ENCODE measurements at regions of chr20 and their contacts with region 1.

Region 1: DNA sequence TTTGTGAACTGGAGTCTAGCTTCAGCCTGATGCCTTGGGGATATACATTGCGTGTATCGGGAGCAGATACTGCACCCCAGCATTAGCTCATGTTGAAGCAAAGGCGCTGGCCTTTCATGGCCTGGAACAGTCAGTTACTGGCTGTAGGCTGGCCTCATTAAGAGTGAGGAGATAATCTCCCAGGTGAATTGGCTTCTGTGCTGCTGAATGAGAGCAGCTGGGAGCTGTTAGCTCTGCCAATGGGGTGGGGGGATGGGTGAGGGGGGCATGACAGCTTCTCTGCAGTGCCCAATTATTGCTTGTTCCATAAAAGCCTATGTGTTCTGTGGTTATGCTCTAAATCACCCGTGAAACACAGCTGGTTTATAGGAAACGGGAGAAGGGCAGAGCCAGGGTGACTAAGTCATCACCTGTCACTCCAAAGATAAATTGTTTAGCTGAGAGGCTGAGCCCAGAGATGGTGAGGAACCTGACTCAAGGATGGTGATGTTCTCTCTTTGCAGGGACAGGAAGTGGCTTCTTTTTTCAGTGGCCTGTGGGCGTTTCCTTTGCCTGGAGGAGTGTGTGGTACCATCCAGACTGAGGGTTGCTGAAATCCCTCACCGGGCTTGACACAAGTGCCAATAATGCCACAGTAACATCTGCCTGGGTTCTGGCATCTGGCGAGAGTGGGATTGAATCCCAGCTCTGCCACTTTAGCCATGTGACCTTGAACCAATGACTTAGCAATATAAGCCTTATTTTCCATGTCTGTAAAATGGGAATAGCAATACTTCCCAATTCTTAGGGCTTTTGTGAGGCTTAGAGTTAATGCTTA is 170.8 kb downstream of the BCAS1 start:
- DNase-seq: peak; percentile 95
- ATAC-seq: peak; percentile 88
- H3K4me3 ChIP-seq: no peak overlapping the region
- H3K27ac ChIP-seq: peak overlapping the region; percentile 62
- H3K4me1 ChIP-seq: peaks cover 39% of the 10 kb centered on the region
- H3K27me3 ChIP-seq: no peaks in the 10 kb centered on the region
- CTCF ChIP-seq: no peak
- EP300 ChIP-seq: peak in 1 of 2 experiments; percentile 74; a peak in 2 of 4 replicates
- POLR2A ChIP-seq: no peak
- RAD21 ChIP-seq: no peak

Region 2: GRCh38 chr20:53883098-53883811 is 16.3 kb before region 1 on chr20:
- CTCF ChIA-PET with region 1: interaction called, 3 read pairs
- POLR2A ChIA-PET with region 1: interaction called, 3 read pairs
- RAD21 ChIA-PET with region 1: interaction called, 4 read pairs
- SMC1A ChIA-PET with region 1: interaction called, 16 read pairs
- in situ Hi-C with region 1: no loop called
- intact Hi-C with region 1: no loop called
- DNase-seq: no peak
- ATAC-seq: no peak
- H3K4me3 ChIP-seq: no peak overlapping the region
- H3K27ac ChIP-seq: no peak overlapping the region
- H3K4me1 ChIP-seq: peaks cover 11% of the 10 kb centered on the region
- H3K27me3 ChIP-seq: no peaks in the 10 kb centered on the region
- CTCF ChIP-seq: no peak
- EP300 ChIP-seq: no peak
- POLR2A ChIP-seq: no peak
- RAD21 ChIP-seq: no peak

Region 3: GRCh38 chr20:53910351-53911002 is 10.9 kb after region 1 on chr20:
- CTCF ChIA-PET with region 1: interaction called, 18 read pairs
- POLR2A ChIA-PET with region 1: interaction called, 24 read pairs
- RAD21 ChIA-PET with region 1: interaction called, 59 read pairs
- SMC1A ChIA-PET with region 1: interaction called, 117 read pairs
- in situ Hi-C with region 1: no loop called
- intact Hi-C with region 1: no loop called
- DNase-seq: no peak
- ATAC-seq: no peak
- H3K4me3 ChIP-seq: no peak overlapping the region
- H3K27ac ChIP-seq: no peak overlapping the region
- H3K4me1 ChIP-seq: peaks cover 27% of the 10 kb centered on the region
- H3K27me3 ChIP-seq: no peaks in the 10 kb centered on the region
- CTCF ChIP-seq: no peak
- EP300 ChIP-seq: no peak
- POLR2A ChIP-seq: no peak
- RAD21 ChIP-seq: no peak